ENCODE measurements at regions of chr5 and their contacts with region 1.

Region 1: GRCh38 chr5:80754900-80755299 is 100.1 kb upstream of the DHFR start:
- DNase-seq: peak; percentile 66
- H3K4me3 Mint-ChIP-seq: peak overlapping the region; percentile 45
- H3K27ac Mint-ChIP-seq: peak overlapping the region; percentile 71
- H3K4me1 Mint-ChIP-seq: peaks cover 54% of the 10 kb centered on the region
- H3K27me3 Mint-ChIP-seq: no peaks in the 10 kb centered on the region

Region 2: GRCh38 chr5:80654391-80655230 is 100.3 kb before region 1 on chr5 and contains the starts of genes DHFR and MSH3:
- CTCF ChIA-PET with region 1: no interaction called
- POLR2A ChIA-PET with region 1: interaction called, 4 read pairs
- intact Hi-C with region 1: loop called (anchors 2 kb)
- DNase-seq: peak; percentile 95
- H3K4me3 Mint-ChIP-seq: peak within 1 kb of the TSS; percentile 82
- H3K27ac Mint-ChIP-seq: peak within 1 kb of the TSS; percentile 93
- H3K4me1 Mint-ChIP-seq: peaks cover 20% of the 10 kb centered on the region
- H3K27me3 Mint-ChIP-seq: no peaks in the 10 kb centered on the region
- total RNA-seq, gene DHFR: 108 to 110 TPM
- total RNA-seq, gene MSH3: 23.2 to 23.6 TPM

Region 3: DNA sequence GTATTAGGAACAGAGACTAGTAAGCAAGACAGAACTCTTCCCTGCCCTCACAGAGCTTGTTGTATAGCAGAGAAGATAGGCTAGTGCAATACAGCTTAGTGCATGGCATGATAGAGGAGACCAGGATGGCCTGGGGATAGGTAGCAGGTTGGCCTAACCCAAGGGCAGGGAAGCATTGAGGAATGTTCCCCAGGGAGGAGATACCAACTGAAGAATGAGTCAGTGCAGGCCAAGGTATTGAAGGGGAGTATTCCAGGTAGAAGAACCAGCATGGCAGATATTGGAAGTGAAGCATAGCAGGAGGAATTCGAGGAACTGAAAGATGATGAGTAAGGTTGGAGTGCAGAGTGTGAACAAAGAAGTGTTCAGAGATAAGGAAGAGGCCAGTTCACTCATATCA is 38.5 kb after region 1 on chr5:
- CTCF ChIA-PET with region 1: no interaction called
- POLR2A ChIA-PET with region 1: no interaction called
- intact Hi-C with region 1: loop called (anchors 2 kb)
- DNase-seq: no peak
- H3K4me3 Mint-ChIP-seq: no peak overlapping the region
- H3K27ac Mint-ChIP-seq: no peak overlapping the region
- H3K4me1 Mint-ChIP-seq: peaks cover 8% of the 10 kb centered on the region
- H3K27me3 Mint-ChIP-seq: no peaks in the 10 kb centered on the region

Region 4: DNA sequence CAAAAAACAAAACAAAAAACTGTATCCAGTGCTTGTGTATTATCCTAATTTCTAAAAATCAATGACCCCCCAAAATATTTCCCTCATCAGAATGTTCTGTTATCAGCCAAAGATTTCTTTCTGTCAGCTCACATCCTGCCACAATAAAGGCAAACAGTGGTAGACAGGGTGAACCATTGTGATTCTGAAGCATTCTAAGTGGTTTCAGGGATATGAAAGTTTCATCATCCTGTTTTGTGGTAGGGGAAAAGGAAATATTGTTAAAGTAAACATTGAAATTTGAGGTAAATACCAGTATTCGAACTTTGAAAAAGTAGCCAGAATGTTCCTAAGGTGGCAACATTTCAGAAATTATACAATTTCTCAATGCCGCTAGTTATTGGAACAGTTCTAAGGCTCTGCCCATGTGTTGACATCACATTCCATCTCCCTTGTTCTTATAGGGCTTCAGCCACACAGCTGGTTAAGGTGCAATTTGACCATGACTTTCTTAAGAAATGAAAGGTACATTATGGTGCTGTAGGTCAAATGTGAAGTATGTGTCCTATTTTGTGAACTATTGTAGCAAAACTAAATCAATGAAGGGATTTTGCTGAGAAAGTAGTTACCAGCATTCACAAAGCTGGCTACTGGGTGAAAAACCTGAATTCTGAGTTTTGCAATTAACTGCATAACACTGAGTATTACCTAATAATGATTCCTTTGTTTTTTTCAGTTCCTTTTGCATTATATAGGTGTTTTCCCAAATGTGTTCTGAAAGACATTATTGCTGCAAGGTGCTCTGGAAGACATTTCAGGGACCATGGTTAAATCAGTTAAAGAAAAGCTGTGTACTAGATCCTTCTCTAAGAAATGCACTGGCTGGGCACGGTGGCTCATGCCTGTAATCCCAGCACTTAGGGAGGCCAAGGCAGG is 97.7 kb after region 1 on chr5:
- CTCF ChIA-PET with region 1: no interaction called
- POLR2A ChIA-PET with region 1: no interaction called
- intact Hi-C with region 1: no loop called
- DNase-seq: no peak
- H3K4me3 Mint-ChIP-seq: no peak overlapping the region
- H3K27ac Mint-ChIP-seq: no peak overlapping the region
- H3K4me1 Mint-ChIP-seq: peaks cover 14% of the 10 kb centered on the region
- H3K27me3 Mint-ChIP-seq: no peaks in the 10 kb centered on the region

Region 5: GRCh38 chr5:80884929-80885328 is 130.0 kb after region 1 on chr5:
- CTCF ChIA-PET with region 1: no interaction called
- POLR2A ChIA-PET with region 1: no interaction called
- intact Hi-C with region 1: loop called (anchors 1 kb)
- DNase-seq: peak; percentile 12
- H3K4me3 Mint-ChIP-seq: no peak overlapping the region
- H3K27ac Mint-ChIP-seq: peak overlapping the region; percentile 65
- H3K4me1 Mint-ChIP-seq: peaks cover 21% of the 10 kb centered on the region
- H3K27me3 Mint-ChIP-seq: no peaks in the 10 kb centered on the region

Region 6: GRCh38 chr5:80967500-80968181 is 212.7 kb after region 1 on chr5:
- CTCF ChIA-PET with region 1: no interaction called
- POLR2A ChIA-PET with region 1: no interaction called
- intact Hi-C with region 1: loop called (anchors 1 kb)
- DNase-seq: no peak
- H3K4me3 Mint-ChIP-seq: no peak overlapping the region
- H3K27ac Mint-ChIP-seq: peak overlapping the region; percentile 9
- H3K4me1 Mint-ChIP-seq: peaks cover 61% of the 10 kb centered on the region
- H3K27me3 Mint-ChIP-seq: no peaks in the 10 kb centered on the region

Region 7: DNA sequence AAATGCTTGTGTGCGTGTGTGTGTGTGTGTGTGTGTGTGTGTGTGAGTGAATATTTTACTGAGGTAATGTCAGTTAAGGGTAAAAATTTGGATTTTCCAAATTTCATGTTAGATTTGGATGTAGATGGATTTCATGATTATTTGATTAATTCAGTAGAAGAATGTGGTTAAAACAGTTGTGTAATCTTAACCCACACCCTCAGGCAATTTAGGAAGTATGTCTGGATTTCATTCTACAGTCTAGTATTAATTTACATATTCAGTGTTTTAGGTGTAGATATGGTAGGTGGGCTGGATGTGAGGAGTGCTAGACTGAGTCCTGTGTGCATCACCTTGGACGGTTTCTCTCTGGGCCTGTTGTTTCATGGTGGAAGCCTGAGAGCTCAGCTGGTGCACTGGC is 379.2 kb after region 1 on chr5:
- CTCF ChIA-PET with region 1: no interaction called
- POLR2A ChIA-PET with region 1: no interaction called
- intact Hi-C with region 1: no loop called
- DNase-seq: no peak
- H3K4me3 Mint-ChIP-seq: no peak overlapping the region
- H3K27ac Mint-ChIP-seq: no peak overlapping the region
- H3K4me1 Mint-ChIP-seq: no peaks in the 10 kb centered on the region
- H3K27me3 Mint-ChIP-seq: no peaks in the 10 kb centered on the region

Region 8: GRCh38 chr5:82278095-82278918 is 1523.4 kb after region 1 on chr5 and contains the start of gene RPS23:
- CTCF ChIA-PET with region 1: no interaction called
- POLR2A ChIA-PET with region 1: no interaction called
- intact Hi-C with region 1: loop called (anchors 5 kb)
- DNase-seq: peak; percentile 92
- H3K4me3 Mint-ChIP-seq: peak within 1 kb of the TSS; percentile 86
- H3K27ac Mint-ChIP-seq: peak within 1 kb of the TSS; percentile 97
- H3K4me1 Mint-ChIP-seq: peaks cover 50% of the 10 kb centered on the region
- H3K27me3 Mint-ChIP-seq: no peaks in the 10 kb centered on the region
- total RNA-seq, gene RPS23: 2,621 to 2,722 TPM